Gastrocnemius medialis (tissue), 4 donors: ENCODE measurements at regions of chr6 and their contacts with region 1.

Region 1: GRCh38 chr6:3281631-3282475 is 23.1 kb downstream of the PSMG4 start:
- DNase-seq: peak; percentile 56 to 78
- ATAC-seq: peak; percentile 86 to 87
- H3K4me3 ChIP-seq: no peak overlapping the region
- H3K27ac ChIP-seq: peak overlapping the region; percentile 28 to 75 (median 67)
- H3K4me1 ChIP-seq: peaks cover 20 to 28% of the 10 kb centered on the region in 2 donors
- H3K27me3 ChIP-seq: no peaks in the 10 kb centered on the region
- CTCF ChIP-seq: no peak
- POLR2A ChIP-seq: no peak

Region 2: DNA sequence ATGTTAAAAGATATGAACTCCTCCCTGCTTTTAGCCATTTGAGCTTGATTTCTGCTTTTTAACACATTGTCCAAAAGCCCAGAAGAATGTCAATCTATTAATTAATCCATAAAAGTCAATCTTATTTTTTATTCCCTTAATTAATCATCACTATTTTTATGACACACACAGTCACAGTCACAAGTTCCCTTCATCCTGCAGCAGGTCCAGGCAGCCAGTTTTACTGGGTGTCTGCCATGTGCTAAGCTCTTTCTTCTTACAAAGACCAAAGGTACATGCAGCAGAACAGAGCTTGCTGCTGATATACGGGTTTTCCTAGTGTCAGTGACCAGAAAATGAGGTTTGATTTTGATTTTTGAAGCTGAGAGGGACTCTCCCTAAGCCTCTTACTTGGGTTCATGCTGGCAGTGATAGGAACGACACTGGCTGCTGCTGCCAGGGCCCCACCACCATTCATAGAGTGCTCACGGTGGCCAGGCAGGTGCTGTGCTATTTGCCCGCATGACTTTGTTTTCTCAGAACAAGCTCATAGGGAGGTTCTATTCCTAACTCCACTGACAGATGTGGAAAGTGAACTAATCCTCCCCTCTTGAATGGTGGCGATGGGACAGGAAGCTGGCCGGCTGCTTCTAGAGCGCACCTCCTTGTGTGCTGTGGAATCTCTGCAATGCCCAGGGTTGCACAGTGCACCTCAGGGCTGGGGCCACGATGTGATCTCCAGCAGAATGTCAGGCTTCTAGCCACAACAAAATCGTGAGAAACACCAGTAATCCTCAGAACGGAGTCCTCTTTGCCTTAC is 228.5 kb after region 1 on chr6:
- in situ Hi-C with region 1: no loop called
- intact Hi-C with region 1: loop called (anchors 2 kb)
- DNase-seq: no peak
- ATAC-seq: no peak
- H3K4me3 ChIP-seq: no peak overlapping the region
- H3K27ac ChIP-seq: no peak overlapping the region
- H3K4me1 ChIP-seq: peaks cover 0 to 3% of the 10 kb centered on the region in 2 donors
- H3K27me3 ChIP-seq: no peaks in the 10 kb centered on the region
- CTCF ChIP-seq: no peak
- POLR2A ChIP-seq: no peak

Region 3: DNA sequence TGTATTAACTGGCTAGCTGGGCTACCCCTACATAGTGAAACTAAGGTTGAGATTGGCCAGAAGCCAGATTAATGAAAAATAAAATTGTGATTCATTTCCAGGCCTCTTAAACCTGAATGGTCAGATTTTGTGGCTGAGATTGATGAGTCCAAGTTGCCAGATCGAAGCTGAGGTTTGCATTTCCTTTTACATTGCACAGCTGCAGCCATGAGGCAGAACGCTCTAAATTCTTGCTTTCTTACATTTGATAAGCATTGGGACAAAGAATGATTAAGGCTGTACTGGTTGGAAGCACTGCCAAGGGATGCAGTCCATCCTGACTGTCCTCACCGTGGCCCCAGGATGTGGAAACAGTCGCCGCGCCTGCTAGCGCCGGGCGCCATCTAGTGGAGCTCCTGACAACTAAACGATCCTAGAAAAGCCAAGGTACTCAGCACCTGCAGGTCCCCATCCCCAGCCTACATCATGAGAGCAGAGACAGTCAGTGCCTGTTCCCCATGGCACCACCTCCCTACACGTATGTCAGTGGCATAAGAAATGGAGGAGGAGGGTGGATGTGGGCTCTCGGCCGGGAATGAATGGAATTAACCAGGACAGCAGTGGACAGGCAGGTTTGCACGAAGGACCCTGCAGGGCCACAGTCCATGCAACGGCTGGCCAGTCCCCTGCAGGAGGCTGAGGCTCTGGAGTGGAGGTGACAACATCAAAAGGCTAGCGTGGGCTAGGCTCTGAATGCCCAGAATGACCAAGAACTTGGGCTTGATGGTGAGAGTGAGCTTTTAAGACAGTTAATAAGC is 450.7 kb after region 1 on chr6:
- in situ Hi-C with region 1: loop called (anchors 5 to 10 kb)
- intact Hi-C with region 1: loop called (anchors 1 kb)
- DNase-seq: peak; percentile 47 to 66
- ATAC-seq: peak; percentile 75 to 90
- H3K4me3 ChIP-seq: no peak overlapping the region
- H3K27ac ChIP-seq: no peak overlapping the region
- H3K4me1 ChIP-seq: no peaks in the 10 kb centered on the region
- H3K27me3 ChIP-seq: no peaks in the 10 kb centered on the region
- CTCF ChIP-seq: peak; percentile 67 to 92 (median 83)
- POLR2A ChIP-seq: no peak

Region 4: GRCh38 chr6:3748208-3749066 is 466.6 kb after region 1 on chr6:
- in situ Hi-C with region 1: no loop called
- intact Hi-C with region 1: no loop called
- DNase-seq: peak; percentile 55 to 81
- ATAC-seq: peak; percentile 47 to 50
- H3K4me3 ChIP-seq: peak overlapping the region in 2 of 4 donors; percentile 72 to 76
- H3K27ac ChIP-seq: peak overlapping the region; percentile 89 to 96 (median 90)
- H3K4me1 ChIP-seq: peaks cover 39 to 64% of the 10 kb centered on the region in 2 donors
- H3K27me3 ChIP-seq: no peaks in the 10 kb centered on the region
- CTCF ChIP-seq: peak; percentile 36 to 73 (median 65)
- POLR2A ChIP-seq: peak in 1 of 2 donors; percentile 23

Region 5: DNA sequence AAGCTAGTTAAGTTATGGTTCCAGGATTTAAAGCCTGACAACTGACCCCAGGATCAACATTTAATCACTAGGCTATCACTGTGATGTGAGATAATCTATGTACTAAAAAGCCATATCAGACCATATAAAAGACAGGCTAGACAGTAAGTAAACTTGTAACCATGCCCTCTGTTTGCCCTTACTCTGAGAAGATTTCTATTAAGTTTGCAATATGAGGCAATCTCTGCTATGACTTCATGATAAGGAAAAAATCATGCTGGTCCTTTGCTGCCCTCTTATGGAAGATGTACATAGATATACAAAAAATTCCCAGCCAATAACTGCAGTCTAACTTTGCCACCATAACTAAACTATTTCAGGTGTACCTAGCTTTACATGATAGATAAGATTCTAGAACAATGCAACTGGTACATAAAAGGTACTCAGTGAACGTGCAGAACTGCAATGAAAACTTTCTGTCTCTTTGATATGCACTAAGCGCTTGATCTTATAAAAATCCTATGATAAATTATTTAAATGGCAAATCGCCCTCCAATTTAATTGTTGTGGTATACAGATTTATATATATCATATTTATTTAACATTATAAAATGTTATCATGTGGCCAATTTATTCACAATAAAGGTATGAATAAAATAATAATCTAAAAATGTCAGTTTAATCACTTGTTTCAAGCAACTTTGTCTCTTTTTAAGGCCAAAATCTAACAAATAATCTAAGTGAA is 726.6 kb after region 1 on chr6:
- in situ Hi-C with region 1: loop called in 2 of 4 experiments (anchors 25 kb)
- intact Hi-C with region 1: loop called (anchors 10 kb)
- DNase-seq: no peak
- ATAC-seq: peak; percentile 72 to 99
- H3K4me3 ChIP-seq: no peak overlapping the region
- H3K27ac ChIP-seq: peak overlapping the region; percentile 53 to 66 (median 57)
- H3K4me1 ChIP-seq: peaks cover 3 to 8% of the 10 kb centered on the region in 2 donors
- H3K27me3 ChIP-seq: no peaks in the 10 kb centered on the region
- CTCF ChIP-seq: peak; percentile 46 to 73 (median 62)
- POLR2A ChIP-seq: no peak